Posterior cingulate gyrus (tissue), 11 donors: ENCODE measurements at regions of chr6 and their contacts with region 1.

Region 1: DNA sequence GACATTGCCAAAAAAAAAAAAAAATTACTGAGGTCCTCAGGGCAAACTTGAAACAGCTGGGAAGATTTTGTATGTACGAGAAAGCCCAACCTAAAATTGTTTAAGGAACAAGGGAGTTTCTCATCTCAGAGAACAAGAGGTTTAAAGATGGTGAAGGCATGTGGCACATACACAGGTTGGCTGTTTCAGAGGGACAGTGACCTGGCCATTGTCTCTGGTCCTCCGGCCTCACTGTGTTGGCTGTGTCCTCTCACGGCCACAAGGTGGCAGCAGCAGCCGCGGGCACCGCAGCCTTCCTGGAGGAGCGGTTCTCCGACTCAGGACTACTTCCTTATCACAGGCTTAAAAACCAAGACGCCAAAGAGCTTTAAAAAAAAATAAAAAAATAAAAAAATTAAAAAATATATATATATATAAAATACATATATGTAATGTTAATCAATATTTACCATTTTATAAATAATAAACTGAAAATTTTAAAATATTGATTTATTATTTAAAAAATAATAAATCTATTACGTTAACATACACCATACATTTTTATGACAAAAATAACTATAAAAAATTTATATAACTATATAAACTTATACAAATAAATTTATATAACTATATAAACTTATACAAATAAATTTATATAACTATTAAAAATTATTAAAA is 52.8 kb downstream of the GTF2H5 start:
- DNase-seq: peak; percentile 67 to 98 (median 83)

Region 2: DNA sequence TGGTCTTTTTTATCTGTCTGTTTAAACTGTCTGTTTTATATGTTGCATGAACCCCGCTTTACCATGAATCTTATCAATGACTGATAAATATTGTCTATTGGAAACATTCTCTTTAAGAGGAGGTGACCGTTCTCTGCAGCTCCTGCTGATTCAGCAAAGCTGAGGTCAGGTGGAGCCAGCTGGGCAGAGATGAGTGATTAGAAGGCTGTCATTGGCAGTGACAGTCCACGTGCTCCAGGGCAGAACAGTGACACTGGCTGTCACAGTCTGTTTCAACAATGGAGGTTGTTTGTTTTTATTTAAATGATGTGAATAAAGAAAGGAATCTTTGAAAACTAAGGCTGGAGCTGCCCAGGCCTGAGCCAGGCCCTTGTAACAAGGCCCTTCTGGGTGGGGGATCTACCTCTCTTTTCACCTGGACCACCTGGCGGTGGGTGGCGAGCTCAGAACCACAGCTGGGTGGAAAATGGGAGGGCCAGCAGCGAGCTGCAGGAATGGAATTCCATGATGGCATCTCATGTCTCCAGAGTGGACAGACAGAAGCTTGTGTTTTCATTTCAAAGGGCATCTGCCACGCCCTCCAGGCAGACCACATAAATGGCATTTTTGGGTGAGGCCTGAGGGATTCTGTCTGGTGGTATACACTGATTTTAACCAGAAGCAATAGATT is 226.7 kb before region 1 on chr6:
- intact Hi-C with region 1: no loop called
- DNase-seq: peak in 7 of 10 donors; percentile 43 to 93 (median 64)

Region 3: DNA sequence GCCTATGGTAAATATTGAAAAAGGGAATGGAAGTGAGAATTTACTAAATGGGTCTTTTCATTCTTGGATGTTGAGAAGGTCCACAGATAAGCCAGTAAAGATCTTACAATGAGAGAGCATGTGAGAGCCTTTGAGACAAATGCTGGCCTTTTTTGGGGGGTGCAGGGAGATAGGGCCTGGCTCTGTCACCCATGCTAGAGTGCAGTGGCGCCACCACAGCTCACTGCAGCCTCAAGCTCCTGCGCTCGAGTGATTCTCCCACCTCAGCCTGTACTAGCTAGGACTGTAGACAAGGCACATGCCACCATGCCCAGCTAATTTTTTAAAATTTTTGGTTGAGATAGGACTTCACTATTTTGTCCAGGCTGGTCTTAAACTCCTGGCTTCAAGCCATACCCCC is 275.8 kb after region 1 on chr6:
- intact Hi-C with region 1: loop called (anchors 10 kb)
- DNase-seq: no peak

Region 4: DNA sequence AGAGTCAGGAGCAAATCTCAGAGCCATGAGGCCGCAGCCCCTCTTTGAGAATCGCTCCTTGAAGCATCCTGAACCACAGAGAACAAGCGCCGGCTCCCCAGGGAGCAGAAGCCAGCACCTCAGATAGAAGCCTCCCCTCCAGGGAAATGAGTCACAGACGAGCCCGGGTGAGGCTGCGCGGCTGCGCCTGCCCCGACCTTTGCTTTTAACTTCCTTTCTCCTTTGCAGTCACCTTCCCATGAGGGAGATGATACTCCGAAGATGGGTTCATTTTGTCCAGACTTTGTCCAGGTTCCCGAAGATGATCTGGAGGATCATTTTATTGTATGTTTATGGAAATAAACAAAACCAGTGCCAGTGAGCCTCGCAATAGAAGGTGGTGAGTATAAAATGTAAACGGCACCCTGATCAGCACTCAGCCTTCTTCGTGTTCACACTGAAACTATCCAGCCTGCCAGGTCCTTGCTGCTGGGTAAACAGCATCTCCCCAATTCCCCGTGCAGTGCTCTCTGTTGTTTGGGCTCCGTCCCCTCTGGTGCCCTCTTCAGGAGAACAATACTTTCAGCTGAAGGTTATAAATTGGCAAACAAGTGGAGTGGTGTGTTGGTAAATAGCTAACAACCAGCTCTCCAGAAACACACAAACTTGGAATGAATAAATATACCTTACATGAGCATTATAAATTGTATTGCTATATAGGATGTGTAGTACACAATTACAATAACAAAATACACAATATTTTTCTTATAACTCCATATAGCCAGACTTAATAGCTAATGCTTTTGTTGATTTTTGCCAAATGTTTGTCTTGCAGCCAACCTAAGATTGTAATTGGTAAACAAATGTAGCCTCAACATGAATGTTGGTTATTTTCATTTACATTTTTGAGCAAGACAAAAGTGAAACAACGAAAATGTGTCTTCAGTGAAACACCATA is 297.5 kb after region 1 on chr6:
- intact Hi-C with region 1: loop called (anchors 2 kb)
- DNase-seq: peak in 9 of 10 donors; percentile 32 to 93 (median 63)

Region 5: GRCh38 chr6:158694913-158695312 is 474.0 kb after region 1 on chr6:
- intact Hi-C with region 1: loop called (anchors 5 kb)
- DNase-seq: no peak